Activated T-helper 1 cell treated with anti-CD3 and anti-CD28 coated beads, Interleukin-12 subunit alpha, Interleukin-12 subunit beta, Interleukin-2, Interleukin-4 antibody, amounts not matched to agents 30 ng/mL and 10 ng/mL and 1 ng/mL, durations not matched to agents 14 hours and 24 hours and 36 hours (primary cell): ENCODE measurements at regions of chr3 and their contacts with region 1.

Region 1: GRCh38 chr3:106176734-106177133 is 307.9 kb upstream of the CBLB start:
- DNase-seq: peak; percentile 68
- H3K4me3 Mint-ChIP-seq: peak overlapping the region; percentile 75
- H3K27ac Mint-ChIP-seq: peak overlapping the region; percentile 92
- H3K4me1 Mint-ChIP-seq: peaks cover 70% of the 10 kb centered on the region
- H3K27me3 Mint-ChIP-seq: no peaks in the 10 kb centered on the region

Region 2: DNA sequence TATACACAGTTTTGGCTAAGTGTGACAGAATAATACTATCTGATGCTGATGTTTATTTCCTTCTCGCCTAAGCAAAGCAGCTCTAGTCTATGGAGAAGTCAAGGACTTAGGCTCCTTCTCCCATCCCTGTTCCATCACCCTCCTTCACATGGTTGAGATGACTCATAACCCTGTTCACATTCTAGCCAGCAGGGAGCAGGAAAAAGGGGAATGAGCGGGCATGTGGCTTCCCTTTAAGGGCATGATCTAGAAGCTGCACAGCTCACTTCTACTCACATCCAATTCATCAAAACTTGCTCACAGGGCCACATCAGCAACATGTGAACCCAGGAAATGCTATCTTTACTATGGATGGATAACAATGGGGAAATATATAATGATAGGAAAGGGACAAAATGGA is 348.8 kb before region 1 on chr3:
- intact Hi-C with region 1: loop called (anchors 1 kb)
- DNase-seq: no peak
- H3K4me3 Mint-ChIP-seq: peak overlapping the region; percentile 57
- H3K27ac Mint-ChIP-seq: peak overlapping the region; percentile 96
- H3K4me1 Mint-ChIP-seq: peaks cover 88% of the 10 kb centered on the region
- H3K27me3 Mint-ChIP-seq: no peaks in the 10 kb centered on the region

Region 3: DNA sequence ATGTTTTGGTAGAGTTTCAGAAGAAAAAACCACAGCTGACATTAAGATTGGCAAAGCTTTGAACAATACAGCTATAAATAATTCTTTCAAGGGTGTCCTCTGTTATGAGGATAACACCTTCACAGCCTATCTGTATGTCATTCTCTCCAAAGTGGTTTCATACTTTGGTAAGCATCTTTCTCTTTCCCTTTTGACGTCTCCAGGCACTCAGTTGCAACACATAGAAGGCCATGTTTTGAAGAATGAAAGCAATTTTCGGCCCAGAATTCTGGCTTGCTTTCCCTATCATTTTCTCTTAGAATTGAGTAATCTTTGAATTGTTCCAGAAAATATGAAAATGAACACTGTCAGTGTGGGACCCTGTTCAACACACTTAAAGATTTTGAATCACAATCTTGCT is 107.9 kb before region 1 on chr3:
- intact Hi-C with region 1: loop called (anchors 2 kb)
- DNase-seq: peak; percentile 3
- H3K4me3 Mint-ChIP-seq: no peak overlapping the region
- H3K27ac Mint-ChIP-seq: peak overlapping the region; percentile 87
- H3K4me1 Mint-ChIP-seq: peaks cover 15% of the 10 kb centered on the region
- H3K27me3 Mint-ChIP-seq: no peaks in the 10 kb centered on the region

Region 4: GRCh38 chr3:106215047-106215446 is 38.3 kb after region 1 on chr3:
- intact Hi-C with region 1: loop called (anchors 1 kb)
- DNase-seq: peak; percentile 5
- H3K4me3 Mint-ChIP-seq: peak overlapping the region; percentile 43
- H3K27ac Mint-ChIP-seq: peak overlapping the region; percentile 82
- H3K4me1 Mint-ChIP-seq: peaks cover 56% of the 10 kb centered on the region
- H3K27me3 Mint-ChIP-seq: no peaks in the 10 kb centered on the region

Region 5: GRCh38 chr3:106276755-106277612 is 100.2 kb after region 1 on chr3:
- intact Hi-C with region 1: no loop called
- DNase-seq: no peak
- H3K4me3 Mint-ChIP-seq: no peak overlapping the region
- H3K27ac Mint-ChIP-seq: peak overlapping the region; percentile 9
- H3K4me1 Mint-ChIP-seq: peaks cover 31% of the 10 kb centered on the region
- H3K27me3 Mint-ChIP-seq: no peaks in the 10 kb centered on the region

Region 6: DNA sequence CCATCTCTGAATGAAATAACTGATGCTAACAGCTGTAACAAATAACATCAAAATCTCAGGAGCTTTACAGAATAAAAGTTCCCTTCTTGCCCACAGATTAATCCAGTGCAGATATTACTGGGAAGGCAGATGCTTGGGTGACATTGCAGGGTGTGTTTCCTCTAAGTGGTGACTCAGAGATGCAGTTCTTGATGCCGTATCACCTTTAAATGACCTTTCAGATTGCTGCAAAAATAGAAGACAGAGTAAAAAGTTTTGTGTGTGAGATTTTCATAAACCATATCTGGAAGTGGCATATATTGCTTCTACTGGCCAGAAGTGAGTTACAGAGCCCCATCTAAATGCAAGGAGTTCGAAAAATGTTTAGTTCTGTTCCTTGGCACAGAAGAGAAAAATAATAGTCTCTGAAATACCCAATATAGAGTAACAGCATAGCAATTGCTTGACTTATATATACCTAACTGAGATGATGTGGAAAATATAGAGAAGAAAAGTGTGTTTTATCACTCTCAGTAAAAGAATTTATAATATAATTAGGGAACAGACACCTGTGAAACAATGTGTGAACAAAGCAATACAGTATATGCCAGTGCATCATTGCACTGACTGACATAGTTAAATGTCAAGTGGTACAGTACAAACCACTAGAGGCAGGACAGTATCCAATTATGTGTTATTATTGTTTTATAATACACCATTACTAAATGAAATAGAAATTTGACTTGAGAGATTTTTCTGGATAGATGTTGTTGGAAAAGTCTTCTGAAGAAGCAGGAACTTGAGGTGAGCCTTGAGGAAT is 122.8 kb after region 1 on chr3:
- intact Hi-C with region 1: loop called (anchors 1 kb)
- DNase-seq: no peak
- H3K4me3 Mint-ChIP-seq: peak overlapping the region; percentile 23
- H3K27ac Mint-ChIP-seq: peak overlapping the region; percentile 63
- H3K4me1 Mint-ChIP-seq: peaks cover 70% of the 10 kb centered on the region
- H3K27me3 Mint-ChIP-seq: no peaks in the 10 kb centered on the region

Region 7: GRCh38 chr3:106473576-106474475 is 297.1 kb after region 1 on chr3:
- intact Hi-C with region 1: loop called (anchors 1 kb)
- DNase-seq: no peak
- H3K4me3 Mint-ChIP-seq: no peak overlapping the region
- H3K27ac Mint-ChIP-seq: peak overlapping the region; percentile 94
- H3K4me1 Mint-ChIP-seq: peaks cover 18% of the 10 kb centered on the region
- H3K27me3 Mint-ChIP-seq: no peaks in the 10 kb centered on the region